ENCODE measurements at regions of chr11 and their contacts with region 1.

Region 1: DNA sequence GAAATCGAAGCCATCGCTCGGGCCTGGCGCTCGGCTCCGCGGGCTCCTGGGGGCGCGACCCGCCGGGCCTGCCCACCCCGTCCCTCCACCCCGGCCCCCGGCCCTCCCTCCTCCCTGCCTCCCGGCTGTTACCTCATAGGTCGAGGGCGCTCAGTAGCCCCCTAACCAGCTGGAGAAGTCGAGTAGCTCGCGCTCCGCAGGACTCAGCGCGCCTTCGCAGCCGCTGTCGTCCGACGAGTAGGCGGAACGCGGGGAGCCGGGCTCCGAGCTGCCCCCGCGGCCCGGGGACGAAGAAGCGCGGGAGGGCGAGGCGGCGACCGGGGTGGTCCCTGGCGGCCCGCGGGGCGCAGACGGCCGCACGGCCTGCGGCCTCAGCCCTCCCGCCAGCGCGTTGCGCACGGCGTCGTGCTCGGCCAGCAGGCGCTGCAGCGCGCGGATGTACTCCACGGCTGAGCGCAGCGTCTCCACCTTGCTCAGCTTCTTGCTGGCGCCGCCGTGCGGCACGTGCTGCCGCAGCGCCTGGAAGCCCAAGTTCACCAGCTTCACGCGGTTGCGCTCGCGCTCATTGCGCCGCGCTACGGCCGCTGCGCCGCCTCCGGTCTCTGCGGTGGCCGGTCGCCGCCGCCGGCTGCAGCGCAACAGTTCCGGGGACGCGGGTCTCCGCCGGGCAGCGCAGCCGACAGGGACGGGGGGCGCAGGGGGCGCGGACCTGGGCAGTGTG is 627 bp downstream of the ASCL2 start:
- DNase-seq: peak; percentile 82
- ATAC-seq: peak; percentile 53

Region 2: GRCh38 chr11:2202055-2202899 is 67.5 kb before region 1 on chr11:
- intact Hi-C with region 1: loop called (anchors 5 kb)
- DNase-seq: peak; percentile 46
- ATAC-seq: no peak

Region 3: DNA sequence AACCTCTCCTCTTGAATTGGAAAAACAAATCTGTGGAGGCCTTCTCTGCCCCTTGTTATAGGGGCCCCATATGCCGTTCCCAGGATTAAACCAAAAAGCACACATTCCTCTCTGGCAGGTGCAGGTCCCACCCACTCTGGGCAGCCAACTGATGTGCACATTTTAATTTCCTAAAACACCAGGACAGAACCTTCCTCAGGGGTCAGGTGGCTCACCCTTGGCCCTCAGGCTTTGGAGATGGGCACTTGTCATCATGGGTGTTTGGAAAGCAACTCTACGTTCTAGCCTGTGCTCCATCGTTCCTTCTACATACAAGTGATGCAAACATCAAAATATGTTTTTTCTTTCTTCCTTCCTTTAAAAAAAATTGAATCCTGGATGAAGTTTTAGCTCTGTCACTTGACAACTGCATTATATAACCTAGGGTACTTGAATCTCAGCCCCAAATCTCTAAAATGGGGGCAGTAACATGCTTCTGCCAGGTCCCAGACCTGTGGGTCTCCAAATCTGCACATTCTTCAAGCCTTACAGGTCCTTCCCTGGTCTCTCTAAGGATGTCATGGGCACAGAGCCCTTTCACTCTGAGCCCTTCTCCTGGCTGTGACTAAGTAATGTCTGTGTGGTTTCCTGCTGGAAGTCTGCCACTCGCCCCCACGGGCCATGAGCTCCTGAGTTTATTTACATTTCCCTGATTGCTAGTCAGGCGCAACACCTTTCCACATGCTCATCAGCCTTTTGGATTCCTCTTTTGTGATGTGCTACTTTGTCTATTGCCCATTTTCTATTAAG is 386.3 kb after region 1 on chr11:
- intact Hi-C with region 1: no loop called
- DNase-seq: no peak
- ATAC-seq: no peak